GM13976 (cell line): ENCODE measurements at regions of chr4 and their contacts with region 1.

Region 1: GRCh38 chr4:94406668-94407437 is 44.9 kb upstream of the PDLIM5 start:
- DNase-seq: peak; percentile 36
- CTCF ChIP-seq: peak; percentile 73

Region 2: DNA sequence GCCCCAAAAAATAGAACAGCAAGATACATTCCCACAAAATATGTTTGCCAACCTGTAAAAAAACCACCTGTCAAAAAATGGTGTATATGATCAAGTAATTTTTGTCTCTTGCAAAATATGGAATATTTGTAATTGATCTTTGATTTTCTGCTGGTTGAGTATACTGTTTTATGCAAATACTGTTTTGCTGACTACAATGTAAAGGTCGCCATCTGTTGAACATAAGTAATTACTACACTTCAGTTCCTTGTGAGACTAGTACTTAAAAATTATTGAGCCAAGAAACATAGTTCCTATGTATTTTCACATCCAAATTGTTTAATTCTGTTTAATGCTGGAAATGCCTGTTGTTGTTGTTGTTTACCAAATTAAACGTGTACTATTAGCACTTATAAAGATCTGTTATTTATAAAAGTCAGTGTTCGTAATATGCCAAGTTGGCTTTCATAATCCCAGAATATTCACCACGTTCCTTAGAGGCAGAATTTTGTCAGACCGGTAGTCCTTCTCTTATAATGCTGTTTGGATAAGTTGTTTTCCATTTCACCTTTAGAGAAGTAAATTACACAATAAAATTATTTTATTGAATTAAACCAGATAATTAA is 189.1 kb after region 1 on chr4:
- in situ Hi-C with region 1: loop called (anchors 5 kb)
- DNase-seq: peak; percentile 48
- CTCF ChIP-seq: peak; percentile 43

Region 3: DNA sequence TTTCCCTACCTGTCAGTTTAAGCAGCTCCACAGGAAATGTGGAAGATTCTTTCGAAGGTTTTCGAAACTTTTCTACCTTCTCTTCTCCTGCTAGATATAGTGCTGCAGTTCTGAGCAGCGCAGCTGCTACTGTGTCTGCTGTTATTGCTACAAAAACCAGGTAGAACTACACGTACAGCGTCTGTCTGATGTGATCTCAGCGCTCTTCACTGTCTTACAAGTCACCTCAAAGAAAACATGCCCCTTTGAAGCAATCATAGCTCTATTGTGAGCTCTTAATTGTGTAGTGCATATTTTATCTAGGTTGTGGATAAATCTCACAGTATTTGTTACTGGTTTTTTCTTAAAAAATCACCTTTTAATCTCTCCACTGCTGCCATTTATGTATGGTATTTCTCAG is 203.3 kb after region 1 on chr4:
- in situ Hi-C with region 1: no loop called
- DNase-seq: no peak
- CTCF ChIP-seq: no peak

Region 4: GRCh38 chr4:94814237-94814636 is 407.4 kb after region 1 on chr4:
- in situ Hi-C with region 1: no loop called
- DNase-seq: no peak
- CTCF ChIP-seq: no peak